Endothelial cell of umbilical vein (primary cell): ENCODE measurements at regions of chr10 and their contacts with region 1.

Region 1: DNA sequence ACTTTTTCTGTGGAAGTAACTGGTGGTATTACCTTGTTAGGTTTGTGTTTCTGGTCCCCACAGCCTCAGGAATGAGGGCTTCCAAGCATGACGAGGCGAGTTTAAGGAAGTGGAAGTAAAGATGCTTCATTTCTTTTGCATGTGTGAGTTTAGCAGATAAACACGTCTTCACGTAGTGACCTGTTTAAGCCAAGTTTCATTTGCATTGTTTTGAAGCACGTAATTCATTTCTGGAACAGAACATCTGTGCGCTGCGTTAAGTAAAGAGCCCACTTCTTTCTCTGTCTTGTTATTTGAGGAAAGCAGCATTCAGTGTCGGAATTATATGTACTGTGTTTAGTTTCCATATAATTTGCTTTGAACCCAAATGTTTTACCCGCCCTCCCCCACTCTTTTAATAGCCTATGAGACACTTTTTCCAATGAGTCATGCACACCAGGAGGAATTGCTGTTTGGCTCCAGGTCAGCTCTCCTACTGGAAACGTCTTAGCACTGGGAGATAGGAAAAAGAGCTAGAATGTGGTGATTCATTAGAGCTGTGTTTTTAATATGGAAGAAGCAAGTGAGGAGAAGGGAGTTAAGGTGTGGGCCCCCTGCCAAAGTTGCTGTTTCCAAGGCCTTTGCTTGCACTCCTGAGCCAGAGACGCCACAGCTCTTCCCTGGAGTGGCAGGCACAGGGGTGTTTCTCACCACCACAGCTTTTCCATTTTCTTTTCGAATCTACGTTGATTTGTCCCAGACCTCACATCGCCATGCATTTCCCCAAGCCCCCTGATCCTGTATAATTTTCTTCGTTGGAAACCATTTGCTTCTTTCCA is 36.8 kb downstream of the BTBD16 start:
- DNase-seq: peak; percentile 99
- H3K4me3 ChIP-seq: peak overlapping the region in 1 of 3 experiments; percentile 55
- H3K27ac ChIP-seq: peak overlapping the region; percentile 93
- H3K4me1 ChIP-seq: peaks cover 44% of the 10 kb centered on the region
- H3K27me3 ChIP-seq: no peaks in the 10 kb centered on the region
- CTCF ChIP-seq: no peak
- POLR2A ChIP-seq: no peak

Region 2: GRCh38 chr10:122342293-122343134 is 34.6 kb after region 1 on chr10:
- CTCF ChIA-PET with region 1: interaction called, 4 read pairs
- POLR2A ChIA-PET with region 1: no interaction called
- dilution Hi-C with region 1: no loop called
- intact Hi-C with region 1: loop called (anchors 2 kb)
- DNase-seq: peak; percentile 71
- H3K4me3 ChIP-seq: no peak overlapping the region
- H3K27ac ChIP-seq: no peak overlapping the region
- H3K4me1 ChIP-seq: no peaks in the 10 kb centered on the region
- H3K27me3 ChIP-seq: no peaks in the 10 kb centered on the region
- CTCF ChIP-seq: peak; percentile 64 to 84
- POLR2A ChIP-seq: no peak

Region 3: DNA sequence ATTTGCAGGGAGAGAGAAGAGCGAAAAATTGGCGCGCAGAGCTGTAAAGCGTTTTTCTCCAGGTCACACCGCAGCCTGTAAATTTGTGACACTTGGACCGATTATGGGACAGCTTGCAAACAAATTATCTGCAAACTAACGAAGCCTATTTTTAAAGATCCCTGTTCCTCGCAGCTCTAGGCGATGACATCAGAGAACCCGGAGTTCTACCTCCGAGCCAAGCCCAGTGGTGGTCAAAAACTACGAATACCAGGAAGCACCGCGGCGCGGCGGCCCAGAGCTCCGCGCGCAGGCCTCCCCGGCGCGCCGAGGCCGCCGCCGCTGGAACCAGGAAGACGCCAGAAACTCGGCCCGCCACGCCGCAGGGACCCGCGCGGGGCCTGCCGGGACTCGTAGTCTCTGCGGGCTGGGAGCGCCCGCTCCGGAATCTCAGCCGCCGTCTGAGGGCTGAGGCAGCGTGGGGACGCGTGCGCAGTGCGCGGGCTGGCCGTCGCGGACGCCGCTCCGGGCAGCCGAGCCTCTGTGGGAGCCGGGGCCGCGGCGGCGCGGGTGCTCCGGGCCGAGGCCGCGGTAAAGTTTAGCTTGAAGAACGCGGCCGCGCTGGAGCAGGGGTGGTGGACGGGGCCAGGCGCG is 66.5 kb after region 1 on chr10 and contains the start of gene PLEKHA1:
- CTCF ChIA-PET with region 1: interaction called, 10 read pairs
- POLR2A ChIA-PET with region 1: interaction called, 9 read pairs
- dilution Hi-C with region 1: no loop called
- intact Hi-C with region 1: loop called (anchors 1 kb)
- DNase-seq: peak; percentile 96
- H3K4me3 ChIP-seq: peak within 1 kb of the TSS; percentile 85 to 93 (median 89)
- H3K27ac ChIP-seq: peak within 1 kb of the TSS; percentile 84
- H3K4me1 ChIP-seq: peaks cover 15% of the 10 kb centered on the region
- H3K27me3 ChIP-seq: no peaks in the 10 kb centered on the region
- CTCF ChIP-seq: no peak
- POLR2A ChIP-seq: peak; percentile 56
- total RNA-seq, gene PLEKHA1: 58.0 and 58.8 TPM in 2 replicates

Region 4: DNA sequence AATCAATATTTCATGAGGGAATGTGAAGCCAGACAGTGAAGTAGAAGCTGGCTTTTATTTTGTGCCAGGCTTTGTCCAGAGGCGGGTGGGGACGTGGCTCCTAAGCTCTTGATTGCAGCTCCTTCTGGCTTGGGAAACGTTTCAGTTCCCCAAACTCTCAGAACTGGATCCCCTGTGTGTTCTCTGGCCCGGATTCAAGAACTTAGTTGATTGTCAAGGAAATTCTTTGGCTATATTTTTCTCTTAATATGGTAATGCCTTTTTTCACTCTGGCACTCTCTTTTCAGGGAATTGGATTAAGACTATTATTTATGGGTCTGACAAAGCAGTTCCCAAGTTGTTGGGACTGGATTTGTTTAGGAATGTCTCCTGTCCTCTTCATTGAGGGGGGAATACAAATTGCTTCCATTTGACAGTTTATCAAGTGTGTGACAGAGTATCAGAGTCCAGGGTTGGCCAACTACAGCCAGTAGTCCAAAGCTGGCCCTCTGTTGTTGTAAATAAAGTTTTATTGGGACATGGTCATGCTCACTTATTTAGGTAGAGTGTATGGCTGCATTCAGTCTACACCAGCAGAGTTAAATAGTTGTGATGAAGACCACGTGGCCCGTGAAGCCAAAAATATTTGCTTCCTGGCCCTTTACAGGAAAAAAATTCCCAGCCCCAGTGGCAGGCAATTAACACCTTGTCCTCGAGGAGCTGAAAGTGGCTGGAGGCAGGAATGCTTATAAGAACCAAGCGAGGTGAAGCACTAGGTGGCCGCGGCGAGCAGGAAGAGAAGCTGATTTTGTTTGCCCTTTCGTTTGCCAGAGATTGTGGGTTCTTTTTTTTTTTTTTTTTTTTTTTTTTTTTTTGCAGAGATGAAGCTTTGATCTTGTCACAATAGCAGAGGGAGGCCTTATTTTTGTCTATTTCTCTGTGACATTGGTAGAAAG is 187.8 kb after region 1 on chr10:
- CTCF ChIA-PET with region 1: no interaction called
- POLR2A ChIA-PET with region 1: no interaction called
- dilution Hi-C with region 1: no loop called
- intact Hi-C with region 1: loop called (anchors 1 kb)
- DNase-seq: peak; percentile 72
- H3K4me3 ChIP-seq: peak overlapping the region in 1 of 3 experiments; percentile 32
- H3K27ac ChIP-seq: peak overlapping the region; percentile 91
- H3K4me1 ChIP-seq: peaks cover 32% of the 10 kb centered on the region
- H3K27me3 ChIP-seq: no peaks in the 10 kb centered on the region
- CTCF ChIP-seq: no peak
- POLR2A ChIP-seq: no peak

Region 5: GRCh38 chr10:122525788-122526187 is 217.9 kb after region 1 on chr10:
- CTCF ChIA-PET with region 1: no interaction called
- POLR2A ChIA-PET with region 1: no interaction called
- dilution Hi-C with region 1: no loop called
- intact Hi-C with region 1: loop called (anchors 1 kb)
- DNase-seq: peak; percentile 42
- H3K4me3 ChIP-seq: no peak overlapping the region
- H3K27ac ChIP-seq: no peak overlapping the region
- H3K4me1 ChIP-seq: peaks cover 18% of the 10 kb centered on the region
- H3K27me3 ChIP-seq: no peaks in the 10 kb centered on the region
- CTCF ChIP-seq: peak; percentile 20 to 31
- POLR2A ChIP-seq: no peak

Region 6: GRCh38 chr10:122854648-122855047 is 546.8 kb after region 1 on chr10:
- CTCF ChIA-PET with region 1: no interaction called
- POLR2A ChIA-PET with region 1: no interaction called
- dilution Hi-C with region 1: no loop called
- intact Hi-C with region 1: loop called (anchors 5 kb)
- DNase-seq: peak; percentile 54
- H3K4me3 ChIP-seq: no peak overlapping the region
- H3K27ac ChIP-seq: peak overlapping the region; percentile 73
- H3K4me1 ChIP-seq: peaks cover 61% of the 10 kb centered on the region
- H3K27me3 ChIP-seq: no peaks in the 10 kb centered on the region
- CTCF ChIP-seq: no peak
- POLR2A ChIP-seq: no peak

Region 7: DNA sequence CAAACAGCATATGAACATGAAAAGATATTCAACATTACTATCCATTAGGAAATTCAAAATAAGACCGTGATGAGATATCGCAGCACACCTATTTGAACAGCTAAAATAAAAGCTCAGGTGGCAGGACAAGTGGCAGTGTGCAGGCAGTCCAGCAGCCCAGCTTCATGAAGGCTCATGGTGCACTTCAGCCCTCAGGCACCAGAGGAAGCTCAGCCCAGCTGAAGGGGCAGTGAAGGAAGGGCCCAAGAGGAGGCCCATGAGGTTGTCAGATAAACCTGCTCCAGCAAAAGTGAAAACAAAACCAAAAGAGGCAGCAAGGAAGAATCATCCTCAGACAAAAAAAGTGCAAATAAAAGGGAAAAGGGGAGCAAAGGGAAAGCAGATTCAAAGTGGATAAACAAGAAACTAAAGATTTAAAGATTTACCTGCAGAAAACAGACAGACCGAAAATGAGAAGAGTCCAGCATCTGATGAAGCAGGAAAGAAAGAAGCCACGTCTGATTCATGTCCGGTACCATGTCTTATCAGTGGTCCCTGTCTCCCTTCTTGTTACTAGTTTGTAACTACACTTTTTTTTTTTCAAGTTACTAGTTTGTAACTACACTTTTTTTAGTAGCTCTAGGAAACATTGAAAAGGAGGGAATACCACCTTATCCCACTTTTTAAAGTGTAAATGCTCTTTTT is 586.5 kb after region 1 on chr10:
- CTCF ChIA-PET with region 1: no interaction called
- POLR2A ChIA-PET with region 1: no interaction called
- dilution Hi-C with region 1: no loop called
- intact Hi-C with region 1: no loop called
- DNase-seq: no peak
- H3K4me3 ChIP-seq: no peak overlapping the region
- H3K27ac ChIP-seq: no peak overlapping the region
- H3K4me1 ChIP-seq: no peaks in the 10 kb centered on the region
- H3K27me3 ChIP-seq: no peaks in the 10 kb centered on the region
- CTCF ChIP-seq: no peak
- POLR2A ChIP-seq: no peak